ENCODE measurements at regions of chr16 and their contacts with region 1.

Region 1: GRCh38 chr16:30112197-30113030 is 923 bp downstream of the GDPD3 start:
- DNase-seq: peak; percentile 83 to 84
- ATAC-seq: peak; percentile 86 to 91
- H3K4me3 ChIP-seq: no peak overlapping the region
- H3K27ac ChIP-seq: peak overlapping the region; percentile 5 to 72; a peak in 3 of 6 replicates
- H3K4me1 ChIP-seq: peaks cover 19% of the 10 kb centered on the region
- CTCF ChIP-seq: peak; percentile 83
- EP300 ChIP-seq: no peak
- POLR2A ChIP-seq: no peak
- RAD21 ChIP-seq: peak; percentile 84 to 85

Region 2: GRCh38 chr16:30052671-30053372 is 59.6 kb before region 1 on chr16:
- CTCF ChIA-PET with region 1: no interaction called
- POLR2A ChIA-PET with region 1: no interaction called
- DNase-seq: peak; percentile 94
- ATAC-seq: peak; percentile 74 to 81
- H3K4me3 ChIP-seq: peak overlapping the region; percentile 81
- H3K27ac ChIP-seq: peak overlapping the region; percentile 69 to 88
- H3K4me1 ChIP-seq: peaks cover 22% of the 10 kb centered on the region
- CTCF ChIP-seq: no peak
- EP300 ChIP-seq: no peak
- POLR2A ChIP-seq: no peak
- RAD21 ChIP-seq: no peak

Region 3: GRCh38 chr16:30122604-30123160 is 10.3 kb after region 1 on chr16:
- CTCF ChIA-PET with region 1: interaction called, 16 read pairs
- POLR2A ChIA-PET with region 1: interaction called, 3 read pairs
- DNase-seq: no peak
- ATAC-seq: peak in 1 of 2 experiments; percentile 17; a peak in 3 of 6 replicates
- H3K4me3 ChIP-seq: peak overlapping the region; percentile 73
- H3K27ac ChIP-seq: peak overlapping the region; percentile 92 to 94
- H3K4me1 ChIP-seq: peaks cover 27% of the 10 kb centered on the region
- CTCF ChIP-seq: no peak
- EP300 ChIP-seq: no peak
- POLR2A ChIP-seq: no peak
- RAD21 ChIP-seq: no peak

Region 4: GRCh38 chr16:30139583-30140481 is 27.4 kb after region 1 on chr16:
- CTCF ChIA-PET with region 1: interaction called, 12 read pairs
- POLR2A ChIA-PET with region 1: no interaction called
- DNase-seq: no peak
- ATAC-seq: no peak; a peak in 1 of 6 replicates
- H3K4me3 ChIP-seq: no peak overlapping the region
- H3K27ac ChIP-seq: no peak overlapping the region
- H3K4me1 ChIP-seq: peaks cover 4% of the 10 kb centered on the region; the same call in 1 of the 3 replicates
- CTCF ChIP-seq: no peak
- EP300 ChIP-seq: no peak
- POLR2A ChIP-seq: no peak
- RAD21 ChIP-seq: no peak

Region 5: DNA sequence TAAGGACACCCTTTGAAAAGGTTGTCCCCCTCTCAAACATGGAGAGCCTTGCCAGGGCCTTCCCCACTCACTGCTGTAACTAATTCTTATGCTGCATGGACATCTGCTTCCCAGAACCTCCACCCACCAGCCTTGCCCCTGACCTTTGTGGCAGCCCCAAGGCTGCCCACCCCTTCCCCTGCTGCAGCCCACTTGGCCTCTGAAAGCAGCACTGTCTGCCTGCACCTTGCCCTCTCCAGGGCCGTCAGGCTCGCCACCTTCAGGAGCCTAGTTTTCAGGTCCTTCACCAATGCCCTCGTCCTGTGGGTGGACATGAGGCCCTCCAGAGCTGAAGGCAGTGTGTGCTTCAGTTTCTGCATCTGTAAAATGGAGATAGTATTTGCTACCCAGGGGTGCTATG is 68.3 kb after region 1 on chr16:
- CTCF ChIA-PET with region 1: interaction called, 14 read pairs
- POLR2A ChIA-PET with region 1: no interaction called
- DNase-seq: no peak
- ATAC-seq: no peak
- H3K4me3 ChIP-seq: no peak overlapping the region
- H3K27ac ChIP-seq: no peak overlapping the region
- H3K4me1 ChIP-seq: peaks cover 12% of the 10 kb centered on the region; the same call in 2 of the 3 replicates
- CTCF ChIP-seq: no peak
- EP300 ChIP-seq: no peak
- POLR2A ChIP-seq: no peak
- RAD21 ChIP-seq: no peak

Region 6: GRCh38 chr16:30335598-30336474 is 223.4 kb after region 1 on chr16:
- CTCF ChIA-PET with region 1: no interaction called
- POLR2A ChIA-PET with region 1: no interaction called
- DNase-seq: no peak
- ATAC-seq: peak; percentile 36 to 41; a peak in 5 of 6 replicates
- H3K4me3 ChIP-seq: peak overlapping the region; percentile 59
- H3K27ac ChIP-seq: peak overlapping the region; percentile 85 to 97
- H3K4me1 ChIP-seq: peaks cover 6% of the 10 kb centered on the region; the same call in 1 of the 3 replicates
- CTCF ChIP-seq: no peak
- EP300 ChIP-seq: no peak
- POLR2A ChIP-seq: no peak
- RAD21 ChIP-seq: no peak

Measured in A549 (cell line).